Activated B cell treated with CpG ODN at 0.5 μM for 24 hours (primary cell): ENCODE measurements at regions of chr1 and their contacts with region 1.

Region 1: DNA sequence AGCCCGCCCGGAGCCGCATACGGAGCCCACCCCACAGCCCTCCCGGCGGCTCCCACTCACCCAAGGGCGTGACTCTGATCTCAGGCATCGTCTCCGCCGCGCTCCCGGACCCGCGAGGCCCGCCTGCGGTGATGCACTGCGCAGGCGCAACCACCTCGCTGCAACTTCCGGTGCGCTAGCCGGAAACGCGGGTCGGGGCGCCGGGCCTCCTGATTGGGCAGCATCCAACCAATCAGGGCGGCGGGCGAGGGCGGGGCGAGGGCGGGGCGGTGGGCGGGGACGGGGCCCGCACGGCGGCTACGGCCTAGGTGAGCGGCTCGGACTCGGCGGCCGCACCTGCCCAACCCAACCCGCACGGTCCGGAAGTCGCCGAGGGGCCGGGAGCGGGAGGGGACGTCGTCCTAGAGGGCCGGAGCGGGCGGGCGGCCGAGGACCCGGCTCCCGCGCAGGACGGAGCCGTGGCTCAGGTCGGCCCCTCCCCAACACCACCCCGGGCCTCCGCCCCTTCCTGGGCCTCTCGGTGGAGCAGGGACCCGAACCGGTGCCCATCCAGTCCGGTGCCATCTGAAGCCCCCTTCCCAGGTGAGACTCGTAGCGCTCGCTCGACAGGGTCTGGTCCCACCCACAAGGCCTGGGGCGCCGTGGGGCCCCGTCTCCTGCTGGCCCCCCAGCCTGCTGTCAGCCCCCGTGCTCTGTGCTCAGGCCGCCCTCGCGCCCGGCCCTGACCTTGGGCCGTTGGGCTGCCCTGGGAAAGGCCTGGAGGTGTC is at the starts of genes CPTP and INTS11:
- DNase-seq: peak; percentile 91
- ATAC-seq: peak; percentile 87
- H3K4me3 Mint-ChIP-seq: peak within 1 kb of the TSS; percentile 90
- H3K27ac Mint-ChIP-seq: peak within 1 kb of the TSS; percentile 80
- H3K4me1 Mint-ChIP-seq: peaks cover 41% of the 10 kb centered on the region
- H3K27me3 Mint-ChIP-seq: no peaks in the 10 kb centered on the region
- CTCF ChIP-seq: no peak
- total RNA-seq, gene CPTP: 13.8 and 15.3 TPM in 2 replicates
- total RNA-seq, gene INTS11: 131 and 151 TPM in 2 replicates

Region 2: GRCh38 chr1:1291548-1292441 is 32.9 kb before region 1 on chr1:
- CTCF ChIA-PET with region 1: no interaction called
- POLR2A ChIA-PET with region 1: no interaction called
- intact Hi-C with region 1: no loop called
- DNase-seq: peak; percentile 68
- ATAC-seq: peak; percentile 92
- H3K4me3 Mint-ChIP-seq: no peak overlapping the region
- H3K27ac Mint-ChIP-seq: no peak overlapping the region
- H3K4me1 Mint-ChIP-seq: peaks cover 10% of the 10 kb centered on the region
- H3K27me3 Mint-ChIP-seq: peaks cover 2% of the 10 kb centered on the region
- CTCF ChIP-seq: no peak

Region 3: GRCh38 chr1:1349256-1350012 is 24.7 kb after region 1 on chr1 and contains the start of gene DVL1:
- CTCF ChIA-PET with region 1: no interaction called
- POLR2A ChIA-PET with region 1: interaction called, 3 read pairs
- intact Hi-C with region 1: loop called (anchors 1 kb)
- DNase-seq: peak; percentile 75
- ATAC-seq: peak; percentile 84
- H3K4me3 Mint-ChIP-seq: peak within 1 kb of the TSS; percentile 77
- H3K27ac Mint-ChIP-seq: no peak within 1 kb of the TSS
- H3K4me1 Mint-ChIP-seq: peaks cover 30% of the 10 kb centered on the region
- H3K27me3 Mint-ChIP-seq: peaks cover 12% of the 10 kb centered on the region
- CTCF ChIP-seq: no peak
- total RNA-seq, gene DVL1: 29.3 and 30.7 TPM in 2 replicates